B cell (primary cell): ENCODE measurements at regions of chr16 and their contacts with region 1.

Region 1: GRCh38 chr16:70454222-70455034 is at the start of gene FCSK:
- DNase-seq: peak; percentile 91
- ATAC-seq: peak; percentile 96
- H3K4me3 ChIP-seq: peak within 1 kb of the TSS; percentile 79 to 97 (median 89)
- H3K4me3 Mint-ChIP-seq: peak within 1 kb of the TSS; percentile 94
- H3K27ac ChIP-seq: peak within 1 kb of the TSS; percentile 94 to 97
- H3K27ac Mint-ChIP-seq: peak within 1 kb of the TSS; percentile 92
- H3K4me1 ChIP-seq: peaks cover 10 to 17% of the 10 kb centered on the region in 2 donors
- H3K4me1 Mint-ChIP-seq: peaks cover 20% of the 10 kb centered on the region
- H3K27me3 ChIP-seq: no peaks in the 10 kb centered on the region
- H3K27me3 Mint-ChIP-seq: peaks cover 5% of the 10 kb centered on the region
- CTCF ChIP-seq: peak; percentile 40
- total RNA-seq, gene FCSK: 24.8 and 24.9 TPM in 2 replicates

Region 2: GRCh38 chr16:70345840-70346239 is 108.6 kb before region 1 on chr16:
- CTCF ChIA-PET with region 1: no interaction called
- POLR2A ChIA-PET with region 1: interaction called, 11 read pairs
- intact Hi-C with region 1: loop called (anchors 1 kb)
- DNase-seq: no peak
- ATAC-seq: no peak
- H3K4me3 ChIP-seq: peak overlapping the region; percentile 19 to 77 (median 71)
- H3K4me3 Mint-ChIP-seq: peak overlapping the region; percentile 79
- H3K27ac ChIP-seq: peak overlapping the region; percentile 94 to 95
- H3K27ac Mint-ChIP-seq: peak overlapping the region; percentile 96
- H3K4me1 ChIP-seq: peaks cover 13 to 19% of the 10 kb centered on the region in 2 donors
- H3K4me1 Mint-ChIP-seq: peaks cover 27% of the 10 kb centered on the region
- H3K27me3 ChIP-seq: no peaks in the 10 kb centered on the region
- H3K27me3 Mint-ChIP-seq: no peaks in the 10 kb centered on the region
- CTCF ChIP-seq: no peak

Region 3: DNA sequence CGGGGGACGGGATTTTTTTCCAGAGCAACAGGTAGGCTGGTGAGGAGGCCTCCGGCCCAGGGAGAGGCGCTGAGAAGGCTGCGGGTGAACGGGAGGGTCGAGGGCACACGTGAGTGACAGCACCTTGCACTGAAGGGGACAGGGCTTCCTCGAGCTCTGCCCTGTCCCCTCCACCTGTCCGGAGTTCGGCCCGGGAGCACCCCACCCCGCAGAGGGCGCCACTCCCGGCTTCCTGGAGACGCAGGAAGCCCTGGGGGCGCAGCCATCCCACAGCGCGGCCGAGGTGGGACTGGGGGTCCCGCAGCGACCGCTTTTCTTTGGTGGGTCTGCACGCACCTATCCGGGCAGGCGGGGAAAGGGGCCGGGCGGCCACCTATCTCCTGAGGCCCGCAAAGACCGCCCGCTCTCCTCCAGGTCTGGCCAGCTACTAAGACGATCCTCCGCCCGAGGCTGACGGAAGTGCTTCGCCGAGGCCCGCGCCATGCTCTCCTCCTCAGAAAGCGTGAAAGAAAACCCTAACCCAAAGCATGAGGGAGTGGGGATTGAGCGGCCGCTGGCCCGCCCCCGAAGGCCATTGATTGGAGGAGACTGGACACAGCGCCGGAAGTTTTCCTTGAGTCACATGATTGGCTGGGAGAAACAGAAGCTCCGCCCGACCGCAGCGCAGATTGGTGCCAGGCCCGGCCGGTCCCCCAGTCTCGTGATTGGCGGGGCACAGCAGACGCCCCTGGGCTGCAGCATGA is 73.4 kb before region 1 on chr16:
- CTCF ChIA-PET with region 1: interaction called, 28 read pairs
- POLR2A ChIA-PET with region 1: interaction called, 25 read pairs
- intact Hi-C with region 1: loop called (anchors 1 kb)
- DNase-seq: peak; percentile 96
- ATAC-seq: peak; percentile 93
- H3K4me3 ChIP-seq: peak overlapping the region; percentile 58 to 89 (median 74)
- H3K4me3 Mint-ChIP-seq: peak overlapping the region; percentile 97
- H3K27ac ChIP-seq: peak overlapping the region; percentile 64 to 81
- H3K27ac Mint-ChIP-seq: peak overlapping the region; percentile 95
- H3K4me1 ChIP-seq: peaks cover 18 to 25% of the 10 kb centered on the region in 2 donors
- H3K4me1 Mint-ChIP-seq: peaks cover 8% of the 10 kb centered on the region
- H3K27me3 ChIP-seq: no peaks in the 10 kb centered on the region
- H3K27me3 Mint-ChIP-seq: no peaks in the 10 kb centered on the region
- CTCF ChIP-seq: no peak

Region 4: GRCh38 chr16:70402916-70403659 is 51.3 kb before region 1 on chr16:
- CTCF ChIA-PET with region 1: interaction called, 3 read pairs
- POLR2A ChIA-PET with region 1: no interaction called
- intact Hi-C with region 1: loop called (anchors 1 kb)
- DNase-seq: no peak
- ATAC-seq: no peak
- H3K4me3 ChIP-seq: no peak overlapping the region
- H3K4me3 Mint-ChIP-seq: peak overlapping the region; percentile 20
- H3K27ac ChIP-seq: no peak overlapping the region
- H3K27ac Mint-ChIP-seq: peak overlapping the region; percentile 8
- H3K4me1 ChIP-seq: peaks cover 39 to 52% of the 10 kb centered on the region in 2 donors
- H3K4me1 Mint-ChIP-seq: peaks cover 45% of the 10 kb centered on the region
- H3K27me3 ChIP-seq: peaks cover 0 to 2% (median 0%) of the 10 kb centered on the region in 4 experiments
- H3K27me3 Mint-ChIP-seq: no peaks in the 10 kb centered on the region
- CTCF ChIP-seq: no peak

Region 5: DNA sequence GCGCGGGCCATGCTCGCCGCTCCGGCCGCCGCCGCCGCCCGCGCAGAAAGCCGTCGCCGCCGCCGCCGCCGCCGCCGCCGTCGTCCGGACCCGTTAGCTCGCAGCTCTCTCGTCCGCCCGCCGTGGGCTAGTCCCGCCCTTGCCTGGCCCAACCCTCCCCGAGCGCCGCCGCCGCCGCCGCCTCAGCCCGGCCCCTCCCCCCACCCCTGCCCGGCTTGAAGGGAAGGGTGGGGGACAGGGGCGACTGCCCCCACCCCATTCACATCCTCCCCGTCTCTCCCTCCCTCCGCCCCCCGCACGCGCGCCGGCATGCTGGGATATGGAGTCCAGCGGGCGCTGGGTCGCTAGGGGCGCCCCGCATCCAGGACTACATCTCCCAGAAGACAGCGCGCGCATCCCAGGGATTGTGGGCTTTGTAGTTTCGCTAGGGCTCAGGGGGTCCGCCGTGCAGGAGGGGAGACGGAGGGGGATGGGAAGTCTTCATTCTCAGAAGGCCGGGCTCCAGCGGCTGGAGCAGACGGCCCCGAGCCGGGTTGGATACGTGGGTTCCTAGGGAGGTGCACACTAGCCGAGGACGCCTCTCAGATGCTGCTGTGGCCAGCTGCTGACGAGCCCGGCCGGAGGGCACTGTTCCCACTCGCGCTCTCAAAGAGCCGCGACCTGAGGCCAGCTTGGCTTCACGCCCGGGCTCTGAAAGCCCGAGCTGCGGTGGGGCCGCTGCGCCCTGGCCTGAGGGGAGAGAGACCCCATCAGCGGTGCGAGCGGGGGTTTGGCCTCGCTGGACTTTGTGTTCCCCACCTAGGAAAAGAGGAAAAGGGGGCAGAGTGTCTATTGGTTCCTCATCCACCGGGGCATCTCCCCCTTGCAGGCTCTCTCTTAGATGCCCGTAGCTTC is 15.2 kb before region 1 on chr16 and contains the start of gene ST3GAL2:
- CTCF ChIA-PET with region 1: interaction called, 5 read pairs
- POLR2A ChIA-PET with region 1: interaction called, 19 read pairs
- intact Hi-C with region 1: loop called (anchors 1 kb)
- DNase-seq: peak; percentile 93
- ATAC-seq: peak; percentile 97
- H3K4me3 ChIP-seq: peak within 1 kb of the TSS; percentile 67 to 82 (median 73)
- H3K4me3 Mint-ChIP-seq: peak within 1 kb of the TSS; percentile 91
- H3K27ac ChIP-seq: peak within 1 kb of the TSS; percentile 47 to 51
- H3K27ac Mint-ChIP-seq: peak within 1 kb of the TSS; percentile 90
- H3K4me1 ChIP-seq: peaks cover 34 to 40% of the 10 kb centered on the region in 2 donors
- H3K4me1 Mint-ChIP-seq: peaks cover 39% of the 10 kb centered on the region
- H3K27me3 ChIP-seq: no peaks in the 10 kb centered on the region
- H3K27me3 Mint-ChIP-seq: no peaks in the 10 kb centered on the region
- CTCF ChIP-seq: no peak
- total RNA-seq, gene ST3GAL2: 71.3 and 77.1 TPM in 2 replicates